HEK293 (cell line): ENCODE measurements at regions of chr20 and their contacts with region 1.

Region 1: GRCh38 chr20:54103067-54103761 is 32.8 kb upstream of the BCAS1 start:
- H3K4me3 ChIP-seq: no peak overlapping the region
- H3K27ac ChIP-seq: no peak overlapping the region
- H3K4me1 ChIP-seq: no peaks in the 10 kb centered on the region
- CTCF ChIP-seq: peak; percentile 72

Region 2: DNA sequence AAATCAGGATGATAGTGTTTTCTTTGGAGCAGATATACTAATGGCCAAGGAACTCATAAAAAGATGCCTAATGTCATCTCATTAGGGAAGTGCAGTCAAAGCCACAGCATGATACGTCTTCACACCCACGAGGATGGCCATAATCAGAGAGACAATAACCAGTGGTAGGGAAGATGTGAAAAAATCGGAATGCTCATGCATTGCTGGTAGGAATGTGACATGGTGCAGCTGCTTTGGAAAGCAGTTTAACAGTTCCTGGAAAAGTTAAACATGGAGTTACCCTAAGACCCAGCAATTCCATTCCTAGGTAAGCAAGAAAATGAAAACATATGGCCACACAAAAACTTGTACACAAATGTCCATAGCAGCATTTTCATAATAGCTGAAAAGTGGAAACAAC is 62.7 kb before region 1 on chr20:
- CTCF ChIA-PET with region 1: no interaction called
- POLR2A ChIA-PET with region 1: no interaction called
- H3K4me3 ChIP-seq: no peak overlapping the region
- H3K27ac ChIP-seq: no peak overlapping the region
- H3K4me1 ChIP-seq: no peaks in the 10 kb centered on the region
- CTCF ChIP-seq: no peak

Region 3: DNA sequence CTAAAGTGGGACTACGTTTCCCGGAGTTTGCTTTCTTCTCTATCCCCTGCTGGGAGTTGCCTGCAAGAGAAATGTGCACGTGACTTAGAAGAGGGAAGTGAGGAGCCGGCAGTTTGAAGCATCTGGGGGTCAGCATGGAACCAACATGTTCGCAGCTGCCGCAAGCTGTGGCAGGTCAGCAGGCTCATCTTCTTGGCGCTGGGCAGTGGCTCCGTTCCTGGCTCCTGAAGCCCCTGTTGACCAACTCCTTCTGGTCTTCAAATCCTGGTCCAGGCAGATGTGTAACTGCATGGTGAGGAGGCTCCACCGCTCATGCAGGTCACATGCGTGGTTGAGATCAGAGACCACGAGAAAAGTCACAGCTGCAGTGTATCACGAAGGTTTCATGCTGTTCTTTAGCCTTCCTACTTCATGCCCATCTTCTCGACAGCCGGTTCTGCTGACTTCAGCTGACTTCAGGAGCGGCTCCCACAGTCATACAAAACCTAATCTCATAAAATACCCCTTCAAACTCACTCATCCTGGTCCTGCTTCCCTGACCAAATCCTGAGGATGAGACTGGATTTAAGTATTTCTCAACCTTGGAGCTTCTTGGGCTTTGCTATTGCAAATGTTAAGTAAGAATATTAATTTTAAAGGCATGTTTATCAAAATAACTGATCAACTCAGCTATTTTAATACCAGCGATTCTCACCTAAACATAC is 12.1 kb after region 1 on chr20:
- CTCF ChIA-PET with region 1: interaction called, 16 read pairs
- POLR2A ChIA-PET with region 1: no interaction called
- H3K4me3 ChIP-seq: no peak overlapping the region
- H3K27ac ChIP-seq: no peak overlapping the region
- H3K4me1 ChIP-seq: no peaks in the 10 kb centered on the region
- CTCF ChIP-seq: no peak

Region 4: DNA sequence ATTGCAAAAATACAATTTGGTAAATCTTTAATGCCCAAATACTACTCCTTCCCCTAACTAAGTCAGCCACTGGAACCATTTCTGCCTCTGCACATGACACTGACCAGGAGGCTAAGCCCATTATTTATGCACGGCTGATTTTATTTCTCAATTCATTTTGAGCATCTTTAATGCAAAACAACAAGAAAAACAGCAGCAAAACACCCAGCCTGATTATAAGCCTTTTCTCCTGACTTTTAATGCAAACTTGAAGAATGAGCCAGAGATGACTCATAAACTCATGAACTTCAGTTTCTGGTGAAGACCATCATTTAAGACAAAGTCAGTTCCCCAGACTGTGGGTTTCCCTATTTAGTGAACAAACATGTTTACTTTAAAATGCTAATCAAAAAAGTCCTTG is 19.0 kb after region 1 on chr20:
- CTCF ChIA-PET with region 1: interaction called, 15 read pairs
- POLR2A ChIA-PET with region 1: no interaction called
- H3K4me3 ChIP-seq: no peak overlapping the region
- H3K27ac ChIP-seq: no peak overlapping the region
- H3K4me1 ChIP-seq: 0 out of 2 replicates have a peak, but pooled peaks cover 2% of the 10 kb centered on the region
- CTCF ChIP-seq: no peak

Region 5: GRCh38 chr20:54132612-54133433 is 29.6 kb after region 1 on chr20:
- CTCF ChIA-PET with region 1: interaction called, 18 read pairs
- POLR2A ChIA-PET with region 1: no interaction called
- H3K4me3 ChIP-seq: no peak overlapping the region
- H3K27ac ChIP-seq: no peak overlapping the region
- H3K4me1 ChIP-seq: no peaks in the 10 kb centered on the region
- CTCF ChIP-seq: no peak

Region 6: GRCh38 chr20:54179946-54180345 is 76.7 kb after region 1 on chr20:
- CTCF ChIA-PET with region 1: interaction called, 12 read pairs
- POLR2A ChIA-PET with region 1: no interaction called
- H3K4me3 ChIP-seq: no peak overlapping the region
- H3K27ac ChIP-seq: no peak overlapping the region
- H3K4me1 ChIP-seq: no peaks in the 10 kb centered on the region
- CTCF ChIP-seq: no peak